Ascending aorta (tissue), 2 donors: ENCODE measurements at regions of chr4 and their contacts with region 1.

Region 1: GRCh38 chr4:89434364-89434988 is 126.9 kb upstream of the GPRIN3 start:
- DNase-seq: no peak
- H3K4me3 ChIP-seq: no peak overlapping the region
- H3K27ac ChIP-seq: no peak overlapping the region
- H3K4me1 ChIP-seq: no peaks in the 10 kb centered on the region
- H3K27me3 ChIP-seq: no peaks in the 10 kb centered on the region
- CTCF ChIP-seq: peak; percentile 29 to 51 (median 36)

Region 2: DNA sequence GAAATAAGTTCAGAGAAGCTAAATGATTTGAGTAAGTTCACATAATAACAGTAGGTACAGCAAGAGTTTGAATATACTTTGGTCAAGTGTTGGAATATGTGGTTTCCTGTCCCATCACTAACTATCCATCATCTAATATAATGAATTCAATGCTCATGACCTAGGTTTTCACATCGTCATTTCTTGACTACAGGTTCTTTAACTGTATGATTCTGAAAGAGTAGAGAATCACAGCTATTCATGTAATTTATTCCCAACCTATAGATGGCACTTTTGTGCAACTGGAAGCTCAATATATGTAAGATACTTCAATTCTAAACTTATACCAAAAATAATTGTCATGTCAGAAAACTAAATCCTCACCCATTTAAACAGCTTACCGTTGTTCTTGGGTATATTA is 270.1 kb before region 1 on chr4:
- intact Hi-C with region 1: loop called (anchors 5 kb)
- DNase-seq: no peak
- H3K4me3 ChIP-seq: no peak overlapping the region
- H3K27ac ChIP-seq: no peak overlapping the region
- H3K4me1 ChIP-seq: no peaks in the 10 kb centered on the region
- H3K27me3 ChIP-seq: no peaks in the 10 kb centered on the region
- CTCF ChIP-seq: no peak

Region 3: DNA sequence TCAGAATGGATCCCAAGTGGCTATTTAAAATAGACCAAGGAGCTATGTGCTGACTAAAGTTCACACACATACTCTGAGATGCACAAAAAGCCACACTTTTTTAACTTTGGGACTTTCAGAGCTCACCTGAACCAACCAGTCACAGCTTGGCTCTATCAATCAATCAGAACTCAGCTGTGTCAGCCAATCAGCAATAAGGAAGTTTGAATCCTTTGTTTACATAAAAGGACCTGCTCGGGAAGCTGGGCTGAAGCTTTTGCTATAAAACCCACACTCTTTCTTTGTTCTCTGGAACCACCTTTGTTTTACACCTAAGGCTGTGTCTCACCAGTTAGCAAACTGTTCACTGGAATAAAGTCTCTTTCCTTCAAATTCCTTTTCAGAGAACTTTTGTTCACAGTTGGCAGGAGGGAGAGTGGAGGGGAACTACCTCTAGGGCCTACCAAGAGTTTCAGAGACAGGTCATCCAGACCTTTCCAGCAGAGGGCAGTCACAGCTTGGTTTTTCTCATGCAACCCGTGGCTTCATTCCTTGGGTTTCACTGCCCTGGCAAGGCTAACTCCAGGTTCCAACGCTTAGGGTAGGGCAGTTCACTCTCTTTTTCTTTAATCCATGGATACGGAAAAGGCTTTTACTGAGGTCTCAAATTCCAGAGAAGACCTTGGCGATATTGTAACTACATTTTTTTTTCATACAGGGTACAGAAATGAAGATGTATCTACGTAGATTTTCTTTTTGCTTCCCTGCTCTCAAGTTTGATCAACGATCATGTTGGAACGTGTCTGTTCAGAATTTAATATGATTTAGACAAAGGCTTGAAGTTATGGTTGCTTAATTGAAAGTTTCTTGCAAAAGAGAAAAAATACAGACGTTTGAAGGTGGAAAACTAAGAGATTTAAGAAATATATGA is 207.6 kb before region 1 on chr4:
- intact Hi-C with region 1: loop called (anchors 5 kb)
- DNase-seq: peak in 1 of 2 donors; percentile 83
- H3K4me3 ChIP-seq: no peak overlapping the region
- H3K27ac ChIP-seq: no peak overlapping the region
- H3K4me1 ChIP-seq: no peaks in the 10 kb centered on the region
- H3K27me3 ChIP-seq: no peaks in the 10 kb centered on the region
- CTCF ChIP-seq: peak; percentile 36 to 61 (median 52)